Breast epithelium (tissue), 4 donors: ENCODE measurements at regions of chr13 and their contacts with region 1.

Region 1: DNA sequence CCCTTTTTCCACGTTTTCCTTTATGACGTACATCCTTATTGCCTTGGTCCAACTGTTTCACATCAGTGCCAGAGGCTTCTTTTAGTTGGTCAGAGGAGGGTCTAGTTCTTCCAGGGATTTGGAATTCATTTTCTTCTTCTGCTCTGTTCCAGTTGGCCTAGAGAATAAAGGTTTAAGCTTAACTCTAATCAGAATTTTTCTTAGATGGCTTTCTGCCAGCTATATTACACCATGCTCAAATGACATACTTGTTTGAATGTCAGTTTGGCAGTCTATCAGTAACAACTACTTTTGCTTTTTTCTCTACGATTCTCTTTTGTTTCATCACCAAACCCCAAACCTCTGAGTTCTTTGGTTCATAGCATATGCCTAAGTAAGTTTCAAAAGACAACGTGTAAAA is 16.8 kb downstream of the SPART start:
- DNase-seq: no peak
- H3K4me3 ChIP-seq: no peak overlapping the region
- H3K27ac ChIP-seq: no peak overlapping the region
- H3K4me1 ChIP-seq: no peaks in the 10 kb centered on the region
- H3K27me3 ChIP-seq: no peaks in the 10 kb centered on the region
- CTCF ChIP-seq: no peak
- POLR2A ChIP-seq: no peak

Region 2: DNA sequence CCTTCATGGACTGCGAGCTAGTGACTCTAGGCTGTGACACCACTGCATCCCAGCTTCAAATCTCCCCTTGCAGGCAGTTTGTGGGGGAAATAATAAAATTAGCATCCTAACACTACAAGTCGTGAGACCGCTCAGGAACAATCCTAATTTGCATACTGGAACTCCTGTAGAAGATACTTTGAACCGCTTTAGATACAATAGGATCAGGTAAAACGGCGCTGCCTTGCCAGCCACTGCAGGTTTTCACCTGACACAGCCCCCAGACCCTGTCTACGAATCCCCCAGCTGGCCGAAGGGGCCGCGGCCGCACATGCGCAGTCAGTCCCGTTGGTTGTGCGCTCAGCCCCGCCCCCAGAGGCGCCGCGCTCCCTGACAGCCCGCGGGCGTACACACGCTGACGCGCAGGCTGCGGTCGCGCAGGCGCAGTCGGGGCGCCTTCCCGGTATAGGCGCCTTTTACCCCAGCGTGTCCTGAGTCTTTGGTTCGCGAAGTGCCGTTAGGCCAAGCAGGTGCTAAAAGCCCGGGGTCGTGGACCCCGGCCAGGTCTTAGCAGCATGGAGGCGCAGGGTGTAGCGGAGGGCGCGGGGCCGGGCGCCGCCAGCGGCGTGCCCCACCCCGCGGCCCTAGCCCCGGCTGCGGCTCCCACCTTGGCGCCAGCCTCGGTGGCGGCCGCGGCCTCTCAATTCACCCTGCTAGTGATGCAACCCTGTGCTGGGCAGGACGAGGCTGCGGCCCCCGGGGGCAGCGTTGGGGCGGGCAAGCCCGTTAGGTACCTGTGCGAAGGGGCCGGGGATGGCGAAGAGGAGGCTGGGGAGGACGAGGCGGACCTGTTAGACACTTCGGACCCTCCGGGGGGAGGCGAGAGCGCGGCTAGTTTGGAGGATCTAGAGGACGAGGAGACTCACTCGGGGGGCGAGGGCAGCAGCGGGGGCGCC is 489.7 kb after region 1 on chr13 and contains the start of gene RFXAP:
- intact Hi-C with region 1: loop called (anchors 5 kb)
- DNase-seq: peak; percentile 66 to 70
- H3K4me3 ChIP-seq: peak within 1 kb of the TSS; percentile 73 to 87 (median 80)
- H3K27ac ChIP-seq: peak within 1 kb of the TSS; percentile 41 to 70
- H3K4me1 ChIP-seq: peaks cover 0 to 10% of the 10 kb centered on the region in 2 donors
- H3K27me3 ChIP-seq: no peaks in the 10 kb centered on the region
- CTCF ChIP-seq: no peak
- POLR2A ChIP-seq: peak; percentile 29
- total RNA-seq, gene RFXAP: 3.8 to 6.6 (median 5.9) TPM